HEK293 (cell line): ENCODE measurements at regions of chr17 and their contacts with region 1.

Region 1: GRCh38 chr17:33725675-33726271 is 432.7 kb upstream of the ASIC2 start:
- H3K4me3 ChIP-seq: no peak overlapping the region
- H3K27ac ChIP-seq: no peak overlapping the region
- H3K4me1 ChIP-seq: no peaks in the 10 kb centered on the region
- CTCF ChIP-seq: no peak

Region 2: GRCh38 chr17:33664116-33664840 is 61.5 kb before region 1 on chr17:
- CTCF ChIA-PET with region 1: no interaction called
- POLR2A ChIA-PET with region 1: no interaction called
- H3K4me3 ChIP-seq: no peak overlapping the region
- H3K27ac ChIP-seq: no peak overlapping the region
- H3K4me1 ChIP-seq: peaks cover 8% of the 10 kb centered on the region
- CTCF ChIP-seq: no peak

Region 3: GRCh38 chr17:33750943-33751701 is 25.3 kb after region 1 on chr17:
- CTCF ChIA-PET with region 1: interaction called, 69 read pairs
- POLR2A ChIA-PET with region 1: no interaction called
- H3K4me3 ChIP-seq: no peak overlapping the region
- H3K27ac ChIP-seq: no peak overlapping the region
- H3K4me1 ChIP-seq: peaks cover 8% of the 10 kb centered on the region; the same call in 1 of the 2 replicates
- CTCF ChIP-seq: peak; percentile 59

Region 4: GRCh38 chr17:34068506-34069035 is 342.8 kb after region 1 on chr17:
- CTCF ChIA-PET with region 1: no interaction called
- POLR2A ChIA-PET with region 1: no interaction called
- H3K4me3 ChIP-seq: no peak overlapping the region
- H3K27ac ChIP-seq: no peak overlapping the region
- H3K4me1 ChIP-seq: no peaks in the 10 kb centered on the region
- CTCF ChIP-seq: no peak